Activated CD4-positive, alpha-beta T cell treated with anti-CD3 and anti-CD28 coated beads, Interleukin-2, amount 10 ng/mL, durations not matched to agents 24 days and 14 days (primary cell): ENCODE measurements at regions of chr19 and their contacts with region 1.

Region 1: GRCh38 chr19:47863514-47863936 is 4.5 kb downstream of the TPRX2 start:
- DNase-seq: peak; percentile 95
- H3K4me3 Mint-ChIP-seq: no peak overlapping the region
- H3K27ac Mint-ChIP-seq: no peak overlapping the region
- H3K4me1 Mint-ChIP-seq: peaks cover 2% of the 10 kb centered on the region
- H3K27me3 Mint-ChIP-seq: peaks cover 11% of the 10 kb centered on the region

Region 2: GRCh38 chr19:47819858-47820257 is 43.7 kb before region 1 on chr19:
- intact Hi-C with region 1: loop called (anchors 5 kb)
- DNase-seq: no peak
- H3K4me3 Mint-ChIP-seq: no peak overlapping the region
- H3K27ac Mint-ChIP-seq: no peak overlapping the region
- H3K4me1 Mint-ChIP-seq: peaks cover 4% of the 10 kb centered on the region
- H3K27me3 Mint-ChIP-seq: peaks cover 17% of the 10 kb centered on the region

Region 3: GRCh38 chr19:47891923-47892666 is 28.6 kb after region 1 on chr19:
- intact Hi-C with region 1: no loop called
- DNase-seq: no peak
- H3K4me3 Mint-ChIP-seq: no peak overlapping the region
- H3K27ac Mint-ChIP-seq: no peak overlapping the region
- H3K4me1 Mint-ChIP-seq: no peaks in the 10 kb centered on the region
- H3K27me3 Mint-ChIP-seq: no peaks in the 10 kb centered on the region